HEK293T (cell line): ENCODE measurements at regions of chr10 and their contacts with region 1.

Region 1: DNA sequence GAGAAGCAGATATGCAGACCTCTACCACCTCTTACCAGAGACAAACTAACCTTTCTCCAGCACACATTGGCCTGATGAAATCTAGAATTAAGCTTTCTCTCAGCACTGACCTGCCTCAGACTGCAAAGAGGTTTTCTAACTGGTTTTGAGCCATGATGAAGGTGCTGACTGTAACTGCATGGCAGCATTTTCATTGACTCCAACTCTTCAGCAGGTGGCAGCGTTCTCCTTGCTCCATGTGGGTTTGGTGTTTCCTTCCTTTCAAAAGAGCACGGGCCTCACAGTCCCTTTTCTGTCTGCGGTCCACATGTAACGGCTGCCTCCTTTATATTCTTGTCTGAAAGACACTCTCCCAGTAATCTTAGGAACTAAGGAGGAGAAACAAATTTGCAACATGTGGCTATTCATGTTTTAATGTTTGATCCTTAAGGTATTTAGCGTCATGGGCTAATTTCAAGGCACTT is 12.6 kb downstream of the KLLN start:
- DNase-seq: peak; percentile 61

Region 2: DNA sequence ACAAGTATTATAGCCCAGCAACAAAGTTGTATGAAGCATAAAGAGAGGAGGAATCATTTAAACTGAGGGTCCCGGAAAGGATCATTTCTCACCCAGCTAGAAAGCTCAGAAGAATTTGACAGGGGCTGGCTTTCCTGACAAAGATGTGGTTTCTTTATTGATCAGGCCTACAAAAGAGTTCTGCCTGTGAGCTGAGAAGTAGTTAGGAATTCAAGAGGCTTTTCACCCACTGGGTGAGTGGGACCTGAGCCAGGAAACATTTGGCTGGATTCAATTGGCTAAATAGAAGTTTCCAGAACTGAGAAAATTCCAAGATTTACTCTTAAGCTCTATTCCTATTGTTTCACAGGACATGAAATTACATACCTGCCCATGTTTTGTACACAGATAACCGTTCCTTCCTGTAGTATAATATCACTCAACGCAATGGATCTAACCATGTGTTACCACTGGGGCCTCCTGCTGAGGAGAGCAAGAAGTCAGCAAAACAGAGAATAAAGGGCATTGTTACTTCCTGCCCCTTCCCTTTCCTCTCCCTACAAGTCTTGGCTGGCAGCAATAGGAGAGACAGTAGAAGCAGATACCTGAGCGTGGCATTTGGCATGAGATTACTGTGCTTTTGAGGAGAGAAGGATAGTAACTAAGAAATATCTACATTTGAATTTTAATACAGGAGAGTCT is 245.0 kb before region 1 on chr10:
- CTCF ChIA-PET with region 1: no interaction called
- POLR2A ChIA-PET with region 1: no interaction called
- DNase-seq: no peak

Region 3: GRCh38 chr10:87782721-87783120 is 68.1 kb before region 1 on chr10:
- CTCF ChIA-PET with region 1: no interaction called
- POLR2A ChIA-PET with region 1: no interaction called
- DNase-seq: no peak

Region 4: GRCh38 chr10:87817609-87818504 is 32.9 kb before region 1 on chr10 and contains the start of gene ATAD1:
- CTCF ChIA-PET with region 1: no interaction called
- POLR2A ChIA-PET with region 1: interaction called, 14 read pairs
- DNase-seq: peak; percentile 91

Region 5: GRCh38 chr10:87861953-87862678 is 11.3 kb after region 1 on chr10:
- CTCF ChIA-PET with region 1: interaction called, 5 read pairs
- POLR2A ChIA-PET with region 1: interaction called, 15 read pairs
- DNase-seq: peak; percentile 69